Activated CD4-positive, alpha-beta T cell treated with anti-CD3 and anti-CD28 coated beads, Interleukin-2, amount 10 ng/mL, durations not matched to agents 7 days and 5 days (primary cell): ENCODE measurements at regions of chr2 and their contacts with region 1.

Region 1: GRCh38 chr2:131093006-131093695 is at the start of gene FAM168B:
- DNase-seq: peak; percentile 87
- H3K4me3 Mint-ChIP-seq: peak within 1 kb of the TSS; percentile 86
- H3K27ac Mint-ChIP-seq: peak within 1 kb of the TSS; percentile 95
- H3K4me1 Mint-ChIP-seq: peaks cover 23% of the 10 kb centered on the region
- H3K27me3 Mint-ChIP-seq: peaks cover 2% of the 10 kb centered on the region
- total RNA-seq, gene FAM168B: 52.7 to 53.3 TPM

Region 2: GRCh38 chr2:131105156-131105949 is 12.2 kb after region 1 on chr2 and contains the start of gene PLEKHB2:
- CTCF ChIA-PET with region 1: interaction called, 8 read pairs
- POLR2A ChIA-PET with region 1: interaction called, 12 read pairs
- DNase-seq: peak; percentile 92
- H3K4me3 Mint-ChIP-seq: peak within 1 kb of the TSS; percentile 92
- H3K27ac Mint-ChIP-seq: peak within 1 kb of the TSS; percentile 95
- H3K4me1 Mint-ChIP-seq: peaks cover 48% of the 10 kb centered on the region
- H3K27me3 Mint-ChIP-seq: no peaks in the 10 kb centered on the region
- total RNA-seq, gene PLEKHB2: 55.4 to 55.7 TPM